Prostate gland (tissue), 2 donors: ENCODE measurements at regions of chr6 and their contacts with region 1.

Region 1: DNA sequence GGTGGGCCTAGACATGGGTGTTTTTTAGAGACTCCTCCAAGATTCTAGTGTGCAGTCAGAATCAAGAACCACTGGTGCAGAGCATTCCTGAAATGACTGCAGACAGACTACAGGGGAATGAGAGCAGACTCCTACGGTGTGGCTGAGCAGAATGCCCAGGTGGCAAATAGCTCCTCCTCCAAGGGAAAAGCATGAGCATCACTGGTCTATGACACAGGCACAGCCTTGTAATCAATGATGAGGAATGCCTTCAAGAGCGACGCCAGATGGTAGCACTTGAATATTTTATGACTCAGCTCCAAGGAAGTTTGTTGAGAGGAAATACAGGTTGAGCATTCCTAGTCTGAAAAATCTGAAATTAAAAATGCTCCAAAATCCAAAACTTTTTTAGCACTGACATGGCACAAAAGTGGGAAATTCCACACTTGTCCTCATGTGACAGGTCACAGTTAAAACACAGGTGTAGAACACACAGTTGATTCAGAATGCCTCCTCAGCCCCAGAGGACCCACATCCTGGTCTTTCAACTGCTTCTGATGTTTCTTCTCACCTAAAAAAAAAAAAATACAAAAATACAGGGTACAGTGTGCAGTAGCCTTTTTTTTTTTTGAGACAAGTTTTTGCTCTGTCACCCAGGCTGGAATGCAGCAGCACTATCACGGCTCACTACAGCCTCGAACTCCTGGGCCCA is 10.6 kb upstream of the FAM8A1 start:
- DNase-seq: no peak
- H3K4me3 ChIP-seq: no peak overlapping the region
- H3K27ac ChIP-seq: no peak overlapping the region
- H3K4me1 ChIP-seq: no peaks in the 10 kb centered on the region
- H3K27me3 ChIP-seq: no peaks in the 10 kb centered on the region
- CTCF ChIP-seq: no peak
- POLR2A ChIP-seq: no peak

Region 2: DNA sequence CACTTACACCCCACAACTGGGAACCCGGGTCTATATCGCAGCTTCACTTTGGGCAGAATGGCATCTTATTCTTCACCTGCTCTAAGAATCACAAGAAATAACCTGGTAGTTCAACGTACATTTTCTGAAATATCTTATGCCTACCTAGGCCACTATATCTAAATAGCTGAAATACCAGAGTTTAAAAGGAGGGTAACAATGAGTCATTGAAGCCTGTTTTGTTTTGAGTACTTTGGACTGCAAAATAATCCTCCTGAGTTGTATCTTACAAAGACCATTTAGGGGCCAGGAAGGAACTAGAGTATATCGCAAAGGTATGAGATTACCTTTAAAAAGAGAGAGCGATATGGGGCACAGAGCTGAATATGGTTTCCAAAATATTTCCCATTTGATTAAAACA is 213.9 kb after region 1 on chr6:
- intact Hi-C with region 1: loop called (anchors 5 kb)
- DNase-seq: no peak
- H3K4me3 ChIP-seq: no peak overlapping the region
- H3K27ac ChIP-seq: no peak overlapping the region
- H3K4me1 ChIP-seq: no peaks in the 10 kb centered on the region
- H3K27me3 ChIP-seq: no peaks in the 10 kb centered on the region
- CTCF ChIP-seq: no peak
- POLR2A ChIP-seq: no peak